ENCODE measurements at regions of chr12 and their contacts with region 1.

Region 1: GRCh38 chr12:85155787-85156186 is 119.6 kb downstream of the LRRIQ1 start:
- DNase-seq: peak in 1 of 2 experiments; percentile 74
- ATAC-seq: peak; percentile 68 to 84; a peak in 5 of 6 replicates
- H3K4me3 ChIP-seq: no peak overlapping the region
- H3K27ac ChIP-seq: no peak overlapping the region
- H3K4me1 ChIP-seq: no peaks in the 10 kb centered on the region
- CTCF ChIP-seq: peak; percentile 60
- EP300 ChIP-seq: no peak
- POLR2A ChIP-seq: no peak
- RAD21 ChIP-seq: peak; percentile 80 to 81

Region 2: DNA sequence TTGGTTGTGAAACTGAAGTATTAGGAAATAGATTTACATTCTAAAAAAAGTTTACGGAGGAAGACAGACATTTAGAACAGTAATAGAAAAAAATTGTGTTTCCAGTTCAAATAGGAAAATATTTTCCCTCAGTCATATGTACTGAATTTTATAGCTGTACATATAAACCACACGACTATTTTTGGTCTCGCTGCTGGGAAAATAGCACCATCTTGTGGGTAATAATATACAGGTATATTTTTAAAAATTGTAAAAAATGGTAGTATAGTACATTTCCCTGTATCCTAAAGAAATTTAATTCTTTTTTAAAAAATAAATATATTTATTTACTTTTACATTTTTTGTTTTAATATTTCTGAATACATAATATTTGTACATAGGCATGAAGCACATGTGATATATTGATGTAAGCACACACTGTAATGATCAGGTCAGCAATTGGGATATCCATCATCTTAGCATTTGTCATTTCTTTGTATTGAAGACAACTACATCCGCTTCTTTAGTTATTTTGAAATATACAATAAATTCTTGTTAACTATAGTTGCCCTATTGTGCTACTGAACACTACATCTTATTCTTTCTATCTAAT is 292.9 kb after region 1 on chr12:
- CTCF ChIA-PET with region 1: interaction called, 12 read pairs
- POLR2A ChIA-PET with region 1: no interaction called
- DNase-seq: peak in 1 of 2 experiments; percentile 25
- ATAC-seq: peak in 1 of 2 experiments; percentile 39; a peak in 1 of 6 replicates
- H3K4me3 ChIP-seq: no peak overlapping the region
- H3K27ac ChIP-seq: no peak overlapping the region
- H3K4me1 ChIP-seq: peaks cover 15% of the 10 kb centered on the region; the same call in 1 of the 3 replicates
- CTCF ChIP-seq: peak; percentile 75
- EP300 ChIP-seq: no peak
- POLR2A ChIP-seq: no peak
- RAD21 ChIP-seq: peak; percentile 67 to 72; a peak in 4 of 5 replicates

Measured in A549 (cell line).